Lower leg skin (tissue), 4 donors: ENCODE measurements at regions of chr18 and their contacts with region 1.

Region 1: GRCh38 chr18:839224-840022 is 27.4 kb upstream of the YES1 start:
- DNase-seq: peak; percentile 75 to 98
- H3K4me3 ChIP-seq: no peak overlapping the region
- CTCF ChIP-seq: peak in 1 of 3 donors; percentile 85
- POLR2A ChIP-seq: no peak

Region 2: GRCh38 chr18:616380-616995 is 222.9 kb before region 1 on chr18:
- intact Hi-C with region 1: loop called (anchors 5 kb)
- DNase-seq: no peak
- H3K4me3 ChIP-seq: no peak overlapping the region
- CTCF ChIP-seq: no peak
- POLR2A ChIP-seq: no peak

Region 3: GRCh38 chr18:712401-713134 is 126.9 kb before region 1 on chr18 and contains the start of gene ENOSF1:
- intact Hi-C with region 1: loop called (anchors 10 kb)
- DNase-seq: peak; percentile 83 to 97
- H3K4me3 ChIP-seq: peak within 1 kb of the TSS; percentile 54
- CTCF ChIP-seq: no peak
- POLR2A ChIP-seq: no peak
- total RNA-seq, gene ENOSF1: 36.2 to 42.4 (median 38.6) TPM